ENCODE measurements at regions of chr14 and their contacts with region 1.

Region 1: GRCh38 chr14:23379366-23380196 is 2.7 kb downstream of the CMTM5 start:
- DNase-seq: peak; percentile 83
- H3K4me3 ChIP-seq: peak overlapping the region in 1 of 2 experiments; percentile 52; a peak in 1 of 4 replicates
- H3K27ac ChIP-seq: no peak overlapping the region
- H3K4me1 ChIP-seq: peaks cover 0 to 3% of the 10 kb centered on the region in 2 experiments; a peak in 1 of 4 replicates
- H3K27me3 ChIP-seq: peaks cover 8% of the 10 kb centered on the region
- CTCF ChIP-seq: peak; percentile 81
- EP300 ChIP-seq: no peak
- RAD21 ChIP-seq: peak; percentile 87

Region 2: DNA sequence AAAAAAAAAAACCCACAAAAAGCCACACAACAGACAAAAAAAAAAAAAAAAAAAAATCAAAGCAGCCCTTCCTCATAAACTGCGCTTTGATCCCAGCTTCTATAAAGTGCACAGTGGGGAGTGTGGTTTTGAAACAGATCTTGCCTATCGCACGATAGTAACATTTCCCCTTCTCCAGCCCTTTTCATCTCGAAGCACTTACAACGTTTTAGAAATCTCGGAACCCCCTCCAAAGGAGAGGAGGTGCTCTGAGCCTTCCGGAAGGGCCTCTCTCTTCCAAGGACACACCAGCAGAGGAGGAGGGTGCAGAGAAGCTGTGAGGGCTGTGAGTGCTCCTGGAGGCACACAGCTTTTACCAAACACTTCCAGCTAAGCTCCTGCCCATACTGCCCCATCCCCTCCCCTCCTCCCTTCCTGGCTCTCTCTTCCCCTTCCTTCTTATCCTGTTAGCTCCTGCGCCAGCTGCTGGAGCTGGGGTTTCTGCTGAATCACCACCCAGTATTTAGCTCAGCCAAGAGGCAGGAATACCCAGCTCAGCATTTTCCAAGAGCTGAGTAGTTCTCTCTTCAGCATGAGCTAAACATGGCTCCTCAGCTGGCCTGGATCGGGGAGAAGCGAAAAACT is 224.5 kb before region 1 on chr14:
- CTCF ChIA-PET with region 1: no interaction called
- POLR2A ChIA-PET with region 1: no interaction called
- DNase-seq: no peak
- H3K4me3 ChIP-seq: no peak overlapping the region
- H3K27ac ChIP-seq: no peak overlapping the region
- H3K4me1 ChIP-seq: peaks cover 0 to 32% of the 10 kb centered on the region in 2 experiments; a peak in 3 of 4 replicates
- H3K27me3 ChIP-seq: peaks cover 9% of the 10 kb centered on the region; the same call in 1 of the 2 replicates
- CTCF ChIP-seq: no peak
- EP300 ChIP-seq: no peak
- RAD21 ChIP-seq: no peak

Region 3: GRCh38 chr14:23217032-23218020 is 162.3 kb before region 1 on chr14:
- CTCF ChIA-PET with region 1: no interaction called
- POLR2A ChIA-PET with region 1: no interaction called
- DNase-seq: no peak
- H3K4me3 ChIP-seq: no peak overlapping the region
- H3K27ac ChIP-seq: no peak overlapping the region
- H3K4me1 ChIP-seq: no peaks in the 10 kb centered on the region
- H3K27me3 ChIP-seq: peaks cover 53% of the 10 kb centered on the region
- CTCF ChIP-seq: no peak
- EP300 ChIP-seq: no peak
- RAD21 ChIP-seq: no peak

Region 4: DNA sequence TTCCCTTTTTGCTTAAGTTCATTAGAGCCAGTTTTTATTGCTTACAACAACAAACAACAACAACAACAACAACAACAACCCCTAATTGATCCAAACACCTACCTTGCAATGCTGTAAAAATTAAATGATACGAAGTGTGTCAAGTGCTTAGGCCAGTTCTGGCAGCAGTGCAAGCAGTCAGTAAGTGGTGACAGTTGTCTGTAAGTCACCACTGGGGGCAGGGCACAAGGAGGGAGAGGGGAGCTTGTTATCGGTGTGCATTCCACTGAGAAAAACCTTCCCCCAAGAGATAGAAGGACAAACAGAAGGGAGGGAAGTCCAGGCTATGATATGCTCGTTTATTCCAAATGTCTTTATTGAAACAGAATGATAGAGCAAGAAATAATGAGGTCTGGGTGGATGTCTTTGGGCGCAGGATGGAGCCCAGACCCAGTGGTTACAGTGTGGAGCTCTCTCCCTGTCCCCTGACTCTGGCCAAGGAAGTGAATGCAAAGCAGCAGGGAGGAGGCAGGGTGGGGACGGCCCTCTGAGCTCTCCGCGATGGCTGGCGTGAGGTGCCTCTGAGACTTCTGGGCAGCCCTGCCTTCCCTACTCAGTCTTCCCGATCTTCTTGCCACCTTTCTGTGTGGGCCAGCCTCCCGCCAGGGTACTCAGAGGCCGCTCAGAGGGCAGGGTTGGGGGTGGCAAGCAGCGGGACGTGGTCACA is 33.4 kb before region 1 on chr14:
- CTCF ChIA-PET with region 1: interaction called, 21 read pairs
- POLR2A ChIA-PET with region 1: no interaction called
- DNase-seq: no peak
- H3K4me3 ChIP-seq: no peak overlapping the region
- H3K27ac ChIP-seq: no peak overlapping the region; a peak in 1 of 4 replicates
- H3K4me1 ChIP-seq: peaks cover 0 to under 1% of the 10 kb centered on the region in 2 experiments; a peak in 1 of 4 replicates
- H3K27me3 ChIP-seq: no peaks in the 10 kb centered on the region
- CTCF ChIP-seq: no peak
- EP300 ChIP-seq: no peak
- RAD21 ChIP-seq: no peak

Region 5: GRCh38 chr14:23352511-23353432 is 26.8 kb before region 1 on chr14 and contains the start of gene SLC22A17:
- CTCF ChIA-PET with region 1: interaction called, 42 read pairs
- POLR2A ChIA-PET with region 1: no interaction called
- DNase-seq: peak; percentile 93
- H3K4me3 ChIP-seq: peak within 1 kb of the TSS; percentile 81 to 82
- H3K27ac ChIP-seq: peak within 1 kb of the TSS; percentile 55 to 92
- H3K4me1 ChIP-seq: peaks cover 0 to 12% of the 10 kb centered on the region in 2 experiments; a peak in 1 of 4 replicates
- H3K27me3 ChIP-seq: no peaks in the 10 kb centered on the region
- CTCF ChIP-seq: no peak
- EP300 ChIP-seq: no peak
- RAD21 ChIP-seq: no peak
- polyA plus RNA-seq, gene SLC22A17: 20.6 and 27.2 TPM in 2 replicates

Region 6: GRCh38 chr14:23366426-23366921 is 13.1 kb before region 1 on chr14:
- CTCF ChIA-PET with region 1: interaction called, 46 read pairs
- POLR2A ChIA-PET with region 1: interaction called, 13 read pairs
- DNase-seq: peak; percentile 90
- H3K4me3 ChIP-seq: peak overlapping the region in 1 of 2 experiments; percentile 57; a peak in 2 of 4 replicates
- H3K27ac ChIP-seq: peak overlapping the region in 1 of 2 experiments; percentile 92; a peak in 2 of 4 replicates
- H3K4me1 ChIP-seq: peaks cover 0 to 16% of the 10 kb centered on the region in 2 experiments; a peak in 2 of 4 replicates
- H3K27me3 ChIP-seq: peaks cover 7% of the 10 kb centered on the region; the same call in 1 of the 2 replicates
- CTCF ChIP-seq: no peak
- EP300 ChIP-seq: no peak
- RAD21 ChIP-seq: no peak

Region 7: DNA sequence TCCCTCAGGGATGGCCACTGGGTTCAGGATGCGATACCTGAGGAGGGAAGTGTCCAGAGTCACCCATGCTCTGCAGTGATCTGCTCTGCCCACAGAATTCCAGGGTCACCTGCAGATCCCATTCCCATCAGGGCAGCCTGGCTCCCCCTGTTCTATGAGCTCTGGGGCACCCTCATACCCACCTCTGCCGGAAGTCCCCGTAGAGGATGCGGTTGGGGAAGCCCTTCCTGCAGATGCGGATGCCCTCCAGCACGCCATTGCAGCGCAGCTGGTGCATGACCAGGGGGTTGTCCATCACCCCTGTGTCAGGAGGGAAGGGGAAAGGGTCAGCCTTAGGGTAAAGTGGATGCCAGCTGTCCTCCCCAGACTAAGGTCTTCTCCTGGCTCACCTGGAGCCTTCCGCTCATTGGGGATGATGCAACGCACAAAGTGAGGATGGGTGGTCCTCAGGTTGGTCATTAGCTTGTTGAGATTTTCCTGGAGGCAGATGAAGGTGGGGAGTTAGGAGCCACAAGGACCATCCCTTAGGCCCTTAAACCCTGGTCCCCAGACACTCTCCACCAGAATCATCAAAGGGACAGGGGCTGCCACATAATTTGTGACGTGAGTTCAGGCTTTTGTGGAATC is 17.3 kb after region 1 on chr14:
- CTCF ChIA-PET with region 1: interaction called, 34 read pairs
- POLR2A ChIA-PET with region 1: no interaction called
- DNase-seq: no peak
- H3K4me3 ChIP-seq: no peak overlapping the region
- H3K27ac ChIP-seq: no peak overlapping the region
- H3K4me1 ChIP-seq: no peaks in the 10 kb centered on the region; a peak in 1 of 4 replicates
- H3K27me3 ChIP-seq: peaks cover 37% of the 10 kb centered on the region
- CTCF ChIP-seq: no peak
- EP300 ChIP-seq: no peak
- RAD21 ChIP-seq: no peak

Region 8: GRCh38 chr14:23423657-23424056 is 44.1 kb after region 1 on chr14:
- CTCF ChIA-PET with region 1: interaction called, 11 read pairs
- POLR2A ChIA-PET with region 1: no interaction called
- DNase-seq: no peak
- H3K4me3 ChIP-seq: no peak overlapping the region
- H3K27ac ChIP-seq: no peak overlapping the region
- H3K4me1 ChIP-seq: no peaks in the 10 kb centered on the region
- H3K27me3 ChIP-seq: peaks cover 6% of the 10 kb centered on the region
- CTCF ChIP-seq: no peak
- EP300 ChIP-seq: no peak
- RAD21 ChIP-seq: no peak

Region 9: GRCh38 chr14:23602181-23603095 is 222.9 kb after region 1 on chr14:
- CTCF ChIA-PET with region 1: no interaction called
- POLR2A ChIA-PET with region 1: no interaction called
- DNase-seq: no peak
- H3K4me3 ChIP-seq: no peak overlapping the region
- H3K27ac ChIP-seq: no peak overlapping the region
- H3K4me1 ChIP-seq: no peaks in the 10 kb centered on the region
- H3K27me3 ChIP-seq: no peaks in the 10 kb centered on the region; the same call in 1 of the 2 replicates
- CTCF ChIP-seq: no peak
- EP300 ChIP-seq: no peak
- RAD21 ChIP-seq: no peak

Region 10: GRCh38 chr14:24595073-24595808 is 1215.7 kb after region 1 on chr14:
- CTCF ChIA-PET with region 1: no interaction called
- POLR2A ChIA-PET with region 1: no interaction called
- DNase-seq: no peak
- H3K4me3 ChIP-seq: no peak overlapping the region
- H3K27ac ChIP-seq: no peak overlapping the region
- H3K4me1 ChIP-seq: no peaks in the 10 kb centered on the region
- H3K27me3 ChIP-seq: no peaks in the 10 kb centered on the region
- CTCF ChIP-seq: no peak
- EP300 ChIP-seq: no peak
- RAD21 ChIP-seq: no peak

Measured in SK-N-SH (cell line).